T-cell (primary cell): ENCODE measurements at regions of chr2 and their contacts with region 1.

Region 1: GRCh38 chr2:181430406-181431118 is 26.6 kb upstream of the ITGA4 start:
- DNase-seq: peak in 12 of 35 experiments; percentile 1 to 63 (median 12)
- ATAC-seq: peak in 3 of 4 experiments; percentile 40 to 53 (median 47)
- H3K4me3 ChIP-seq: no peak overlapping the region
- H3K4me3 Mint-ChIP-seq: no peak overlapping the region
- H3K27ac ChIP-seq: peak overlapping the region; percentile 2
- H3K27ac Mint-ChIP-seq: peak overlapping the region; percentile 85 to 86
- H3K4me1 ChIP-seq: peaks cover 0 to 5% of the 10 kb centered on the region in 2 experiments
- H3K4me1 Mint-ChIP-seq: peaks cover 6 to 19% (median 17%) of the 10 kb centered on the region in 3 donors
- H3K27me3 ChIP-seq: no peaks in the 10 kb centered on the region
- H3K27me3 Mint-ChIP-seq: no peaks in the 10 kb centered on the region

Region 2: GRCh38 chr2:181419129-181419855 is 11.3 kb before region 1 on chr2:
- CTCF ChIA-PET with region 1: interaction called in 1 of 2 experiments, 10 read pairs
- POLR2A ChIA-PET with region 1: no interaction called
- DNase-seq: no peak
- ATAC-seq: no peak
- H3K4me3 ChIP-seq: no peak overlapping the region
- H3K4me3 Mint-ChIP-seq: no peak overlapping the region
- H3K27ac ChIP-seq: no peak overlapping the region
- H3K27ac Mint-ChIP-seq: no peak overlapping the region
- H3K4me1 ChIP-seq: peaks cover 2 to 3% of the 10 kb centered on the region in 2 experiments
- H3K4me1 Mint-ChIP-seq: peaks cover 19 to 38% (median 24%) of the 10 kb centered on the region in 3 donors
- H3K27me3 ChIP-seq: no peaks in the 10 kb centered on the region
- H3K27me3 Mint-ChIP-seq: no peaks in the 10 kb centered on the region

Region 3: DNA sequence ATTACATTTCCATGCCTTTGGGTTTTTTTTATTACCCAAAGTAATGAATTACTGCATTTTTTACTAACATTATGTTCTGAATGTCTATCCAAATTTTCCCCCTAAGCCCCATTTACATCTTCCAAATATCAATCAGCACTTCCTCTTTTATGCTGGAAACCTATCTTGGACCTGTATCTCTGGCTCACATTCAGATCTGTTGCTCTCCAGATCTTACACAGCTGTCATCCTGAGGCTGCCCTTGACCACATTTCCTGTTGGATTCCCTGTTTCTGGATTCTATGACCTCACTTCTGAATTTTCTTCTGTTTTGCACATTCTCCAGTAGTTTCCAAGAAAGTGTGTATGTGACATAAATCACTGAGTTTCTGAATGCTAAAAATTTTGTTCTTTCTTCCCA is 849.6 kb after region 1 on chr2:
- CTCF ChIA-PET with region 1: no interaction called
- POLR2A ChIA-PET with region 1: no interaction called
- DNase-seq: no peak
- ATAC-seq: no peak
- H3K4me3 ChIP-seq: no peak overlapping the region
- H3K4me3 Mint-ChIP-seq: no peak overlapping the region
- H3K27ac ChIP-seq: no peak overlapping the region
- H3K27ac Mint-ChIP-seq: no peak overlapping the region
- H3K4me1 ChIP-seq: no peaks in the 10 kb centered on the region
- H3K4me1 Mint-ChIP-seq: no peaks in the 10 kb centered on the region
- H3K27me3 ChIP-seq: no peaks in the 10 kb centered on the region
- H3K27me3 Mint-ChIP-seq: peaks cover 0 to 4% of the 10 kb centered on the region in 2 donors